Esophagus muscularis mucosa (tissue), 4 donors: ENCODE measurements at regions of chr12 and their contacts with region 1.

Region 1: GRCh38 chr12:43882578-43883178 is 46.8 kb downstream of the TMEM117 start:
- DNase-seq: no peak
- H3K4me3 ChIP-seq: no peak overlapping the region
- H3K27ac ChIP-seq: no peak overlapping the region
- H3K4me1 ChIP-seq: no peaks in the 10 kb centered on the region
- H3K27me3 ChIP-seq: no peaks in the 10 kb centered on the region
- CTCF ChIP-seq: peak; percentile 60 to 76 (median 66)
- EP300 ChIP-seq: no peak
- POLR2A ChIP-seq: no peak

Region 2: GRCh38 chr12:43758728-43759563 is 123.7 kb before region 1 on chr12 and contains the starts of genes IRAK4 and PUS7L:
- intact Hi-C with region 1: loop called (anchors 5 kb)
- DNase-seq: peak; percentile 99
- H3K4me3 ChIP-seq: peak within 1 kb of the TSS; percentile 65 to 75 (median 73)
- H3K27ac ChIP-seq: peak within 1 kb of the TSS; percentile 81 to 89 (median 85)
- H3K4me1 ChIP-seq: peaks cover 22 to 33% (median 29%) of the 10 kb centered on the region in 4 donors
- H3K27me3 ChIP-seq: no peaks in the 10 kb centered on the region
- CTCF ChIP-seq: peak; percentile 33 to 54 (median 34)
- EP300 ChIP-seq: no peak
- POLR2A ChIP-seq: peak; percentile 30
- total RNA-seq, gene IRAK4: 13.6 to 24.0 (median 20.6) TPM
- total RNA-seq, gene PUS7L: 5.2 to 8.7 (median 6.7) TPM

Region 3: DNA sequence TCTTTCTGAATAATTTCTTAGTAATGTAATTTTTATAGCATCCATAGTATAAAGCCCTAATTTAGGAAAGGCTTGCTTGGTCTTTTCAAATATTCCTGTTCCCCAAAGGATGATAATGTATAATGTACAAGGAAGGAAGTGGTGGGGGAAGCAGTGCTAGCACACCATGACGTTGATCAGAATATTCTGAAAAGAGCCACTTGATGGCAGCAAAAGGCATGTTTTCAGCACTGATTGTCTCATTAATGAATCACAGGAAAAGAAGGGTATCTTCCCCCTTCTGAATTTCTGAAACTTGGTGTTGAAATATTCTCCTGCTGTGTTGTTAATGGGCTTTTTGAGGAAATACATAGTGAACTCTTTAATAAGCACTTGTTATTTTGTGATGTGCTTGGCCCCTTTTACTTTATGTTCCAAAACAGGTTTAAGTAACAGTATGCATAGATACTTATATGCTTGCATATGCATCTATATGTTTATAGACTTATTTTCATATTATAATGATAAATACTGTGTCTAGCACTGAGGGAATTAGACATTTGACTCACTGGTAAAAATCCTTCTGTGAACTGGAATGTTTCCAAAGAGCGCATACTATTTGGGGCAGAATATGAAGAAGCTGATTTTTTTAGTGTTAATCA is 75.2 kb after region 1 on chr12:
- intact Hi-C with region 1: no loop called
- DNase-seq: no peak
- H3K4me3 ChIP-seq: no peak overlapping the region
- H3K27ac ChIP-seq: no peak overlapping the region
- H3K4me1 ChIP-seq: no peaks in the 10 kb centered on the region
- H3K27me3 ChIP-seq: no peaks in the 10 kb centered on the region
- CTCF ChIP-seq: peak; percentile 7 to 35 (median 30)
- EP300 ChIP-seq: no peak
- POLR2A ChIP-seq: no peak